ENCODE measurements at regions of chr1 and their contacts with region 1.

Region 1: GRCh38 chr1:210407207-210407886 is 78.6 kb downstream of the HHAT start:
- DNase-seq: no peak
- H3K4me3 ChIP-seq: no peak overlapping the region
- CTCF ChIP-seq: peak; percentile 81

Region 2: GRCh38 chr1:210360852-210361477 is 46.4 kb before region 1 on chr1:
- CTCF ChIA-PET with region 1: interaction called, 201 read pairs
- POLR2A ChIA-PET with region 1: no interaction called
- DNase-seq: peak; percentile 37
- H3K4me3 ChIP-seq: no peak overlapping the region
- CTCF ChIP-seq: peak; percentile 60

Region 3: DNA sequence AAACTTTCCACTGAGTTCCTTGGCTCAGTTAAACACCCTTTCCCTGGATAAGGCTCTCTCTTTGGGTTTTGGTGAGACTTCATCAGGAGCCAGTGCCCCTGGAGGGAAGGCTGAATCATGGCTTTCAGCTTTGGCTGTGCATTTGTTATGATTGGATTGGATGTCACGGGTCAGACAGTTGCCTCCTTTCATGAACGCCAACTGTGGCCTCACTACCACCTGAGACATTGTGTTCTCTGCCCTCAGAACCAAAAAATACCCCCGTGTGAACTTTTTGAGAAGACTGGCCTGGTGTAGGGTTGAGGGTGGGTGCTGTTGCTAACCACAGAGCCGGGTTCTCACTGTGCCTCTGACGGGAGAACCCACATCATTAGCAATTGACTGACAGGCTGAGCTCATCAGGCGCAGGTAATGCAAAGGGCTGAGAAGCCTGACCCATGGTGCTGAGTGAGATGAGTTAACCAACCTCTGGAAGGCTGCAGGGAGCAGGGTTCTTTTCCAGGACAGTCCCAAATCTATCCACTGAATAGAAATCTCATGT is 13.0 kb before region 1 on chr1:
- CTCF ChIA-PET with region 1: interaction called, 27 read pairs
- POLR2A ChIA-PET with region 1: no interaction called
- DNase-seq: no peak
- H3K4me3 ChIP-seq: no peak overlapping the region
- CTCF ChIP-seq: no peak

Region 4: GRCh38 chr1:210438928-210439809 is 31.8 kb after region 1 on chr1:
- CTCF ChIA-PET with region 1: interaction called, 15 read pairs
- POLR2A ChIA-PET with region 1: interaction called, 4 read pairs
- DNase-seq: peak; percentile 100
- H3K4me3 ChIP-seq: no peak overlapping the region
- CTCF ChIP-seq: no peak

Region 5: DNA sequence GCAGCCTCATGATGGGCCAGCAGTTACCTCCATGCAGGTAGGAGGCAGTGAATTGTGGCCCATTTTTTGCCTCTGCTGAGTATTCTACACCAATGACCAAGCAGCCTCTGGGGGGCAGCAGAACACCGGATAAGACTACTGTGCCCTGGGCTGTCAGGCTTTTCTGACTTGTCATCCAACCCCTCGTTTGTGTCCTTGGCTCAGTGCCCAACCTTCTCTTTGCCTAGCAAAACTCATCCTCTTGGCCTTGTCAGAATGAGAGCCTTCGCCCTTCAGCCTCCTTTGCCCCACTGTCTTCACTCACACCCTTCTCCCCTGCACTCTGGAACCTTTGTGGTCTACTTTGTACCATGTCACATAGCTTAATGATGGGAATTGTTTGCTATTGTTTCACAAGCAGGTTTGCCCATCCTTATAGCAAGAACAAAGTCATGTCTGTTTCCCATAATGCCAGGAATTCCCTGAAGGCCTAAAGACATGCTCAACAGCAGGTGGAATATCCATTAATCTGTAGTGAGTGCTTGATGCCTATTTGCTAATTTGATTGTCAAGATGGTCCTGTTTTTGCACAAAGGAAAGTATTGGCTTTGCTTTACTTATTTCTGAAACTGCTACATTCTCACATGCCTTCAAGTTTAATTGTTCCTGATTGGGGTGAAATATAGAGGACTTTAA is 177.2 kb after region 1 on chr1:
- CTCF ChIA-PET with region 1: interaction called, 18 read pairs
- POLR2A ChIA-PET with region 1: no interaction called
- DNase-seq: no peak
- H3K4me3 ChIP-seq: no peak overlapping the region
- CTCF ChIP-seq: peak; percentile 82

Region 6: DNA sequence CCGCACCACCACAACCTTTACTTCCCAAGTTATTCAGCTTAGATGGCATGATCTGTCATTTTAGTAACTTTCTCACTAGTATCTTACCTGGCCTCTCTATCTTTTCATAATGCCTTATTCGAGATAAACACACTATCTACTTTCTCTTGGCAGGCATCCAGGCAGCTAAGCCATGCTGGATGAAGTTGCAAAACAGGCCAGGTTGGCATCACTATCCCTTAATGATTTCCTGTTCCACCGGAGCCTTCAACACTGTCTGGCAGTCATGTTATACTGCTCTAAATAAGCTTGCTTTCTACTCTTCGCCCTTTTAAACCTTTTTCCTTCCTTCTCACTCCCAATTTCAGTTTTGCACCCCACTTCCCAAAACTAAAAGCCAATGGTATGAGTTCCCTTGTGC is 738.6 kb after region 1 on chr1:
- CTCF ChIA-PET with region 1: interaction called, 10 read pairs
- POLR2A ChIA-PET with region 1: no interaction called
- DNase-seq: no peak
- H3K4me3 ChIP-seq: no peak overlapping the region
- CTCF ChIP-seq: no peak

Measured in AG04449 (cell line).